ENCODE measurements at regions of chr20 and their contacts with region 1.

Region 1: DNA sequence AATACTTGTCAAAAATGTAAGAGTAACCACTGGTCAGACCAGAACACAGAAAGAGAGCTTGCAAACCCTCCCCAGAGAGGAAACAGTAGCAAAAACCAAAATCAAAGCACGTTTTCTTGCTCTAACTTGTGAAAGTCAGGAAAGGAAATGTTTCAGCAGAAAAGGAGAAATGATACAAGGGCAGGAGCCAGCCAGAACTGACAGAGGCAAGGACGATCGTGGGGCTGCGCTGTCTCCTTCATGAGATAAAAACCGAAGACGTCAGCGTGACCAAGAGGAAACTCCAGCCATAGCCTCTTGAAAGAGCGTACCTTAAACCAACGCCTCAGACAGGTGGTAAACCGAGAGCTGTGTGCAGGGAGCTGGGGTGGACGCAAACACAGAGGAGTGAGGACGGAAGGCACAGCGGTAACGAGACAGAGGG is 27.5 kb downstream of the LAMA5 start:
- DNase-seq: no peak

Region 2: GRCh38 chr20:62080249-62081025 is 259.2 kb before region 1 on chr20:
- intact Hi-C with region 1: no loop called
- DNase-seq: no peak

Region 3: DNA sequence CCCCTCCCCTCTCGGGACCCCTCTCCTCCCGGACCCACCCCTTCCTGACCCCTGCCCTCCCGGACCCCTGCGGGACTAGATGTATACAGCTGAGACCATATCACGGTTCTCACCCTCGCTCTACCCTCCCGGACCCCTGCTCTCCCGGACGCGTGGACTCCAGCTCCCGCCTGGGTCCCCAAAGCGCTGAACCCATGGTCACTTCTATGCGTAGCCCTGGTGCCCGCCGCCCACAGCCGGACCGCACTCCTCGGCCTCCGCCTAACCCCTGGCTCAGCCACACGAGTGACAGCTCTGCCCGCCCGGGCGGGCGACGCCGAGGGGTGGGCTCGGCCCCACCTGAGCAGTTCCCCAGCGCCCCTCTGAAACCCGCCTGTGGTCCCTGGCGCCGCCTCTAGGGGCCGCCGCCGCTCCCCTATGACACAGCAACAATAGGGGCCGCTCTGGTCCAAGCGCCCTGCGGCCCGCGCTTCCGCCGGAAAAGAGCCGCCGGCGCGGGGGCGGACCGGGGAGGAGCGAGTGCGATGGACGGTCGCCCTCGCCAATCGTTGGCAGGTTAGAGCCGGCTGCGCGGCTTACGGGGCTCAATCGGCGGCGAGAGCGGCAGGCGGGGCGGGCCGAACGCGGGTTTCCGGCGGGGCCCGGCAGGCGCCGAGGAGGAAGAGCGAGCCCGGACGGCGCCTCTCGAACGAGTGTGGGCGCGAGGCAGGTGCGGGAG is 37.2 kb before region 1 on chr20 and contains the start of gene ADRM1:
- intact Hi-C with region 1: loop called (anchors 5 kb)
- DNase-seq: peak; percentile 98
- total RNA-seq, gene ADRM1: 79.9 TPM

Region 4: DNA sequence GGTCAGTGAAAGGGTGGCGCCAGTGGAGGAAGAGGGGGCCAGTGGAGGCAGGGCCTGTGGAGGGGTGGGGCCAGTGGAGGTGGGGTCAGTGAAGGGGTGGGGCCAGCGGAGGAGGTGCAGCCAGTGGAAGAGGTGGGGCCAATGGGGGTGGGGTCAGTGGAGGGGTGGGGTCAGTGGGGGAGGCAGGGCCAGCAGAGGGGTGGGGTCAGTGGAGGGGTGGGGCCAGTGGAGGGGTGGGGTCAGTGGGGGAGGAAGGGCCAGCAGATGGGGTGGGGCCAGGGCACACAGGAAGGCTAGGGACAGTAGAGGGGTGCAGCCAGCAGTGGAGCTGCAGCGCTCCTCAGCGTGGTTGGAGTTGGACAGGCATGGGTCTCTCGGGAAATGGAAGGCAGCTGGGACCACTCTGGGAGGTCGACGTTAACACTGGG is 18.1 kb before region 1 on chr20:
- intact Hi-C with region 1: no loop called
- DNase-seq: no peak

Measured in cardiac septum (tissue), 1 donor.